ENCODE measurements at regions of chr15 and their contacts with region 1.

Region 1: GRCh38 chr15:61169904-61170695 is 59.0 kb downstream of the RORA start:
- DNase-seq: no peak
- ATAC-seq: no peak
- H3K4me3 ChIP-seq: no peak overlapping the region
- H3K27ac ChIP-seq: no peak overlapping the region
- H3K4me1 ChIP-seq: no peaks in the 10 kb centered on the region
- H3K27me3 ChIP-seq: no peaks in the 10 kb centered on the region; the same call in 1 of the 2 replicates
- CTCF ChIP-seq: no peak
- POLR2A ChIP-seq: no peak
- RAD21 ChIP-seq: no peak

Region 2: GRCh38 chr15:61080221-61081026 is 89.7 kb before region 1 on chr15:
- CTCF ChIA-PET with region 1: no interaction called
- POLR2A ChIA-PET with region 1: interaction called, 20 read pairs
- dilution Hi-C with region 1: no loop called
- in situ Hi-C with region 1: no loop called
- intact Hi-C with region 1: no loop called
- DNase-seq: no peak
- ATAC-seq: no peak
- H3K4me3 ChIP-seq: no peak overlapping the region
- H3K27ac ChIP-seq: no peak overlapping the region
- H3K4me1 ChIP-seq: peaks cover 2% of the 10 kb centered on the region; the same call in 1 of the 2 replicates
- H3K27me3 ChIP-seq: peaks cover 7% of the 10 kb centered on the region
- CTCF ChIP-seq: no peak
- POLR2A ChIP-seq: no peak
- RAD21 ChIP-seq: no peak

Region 3: DNA sequence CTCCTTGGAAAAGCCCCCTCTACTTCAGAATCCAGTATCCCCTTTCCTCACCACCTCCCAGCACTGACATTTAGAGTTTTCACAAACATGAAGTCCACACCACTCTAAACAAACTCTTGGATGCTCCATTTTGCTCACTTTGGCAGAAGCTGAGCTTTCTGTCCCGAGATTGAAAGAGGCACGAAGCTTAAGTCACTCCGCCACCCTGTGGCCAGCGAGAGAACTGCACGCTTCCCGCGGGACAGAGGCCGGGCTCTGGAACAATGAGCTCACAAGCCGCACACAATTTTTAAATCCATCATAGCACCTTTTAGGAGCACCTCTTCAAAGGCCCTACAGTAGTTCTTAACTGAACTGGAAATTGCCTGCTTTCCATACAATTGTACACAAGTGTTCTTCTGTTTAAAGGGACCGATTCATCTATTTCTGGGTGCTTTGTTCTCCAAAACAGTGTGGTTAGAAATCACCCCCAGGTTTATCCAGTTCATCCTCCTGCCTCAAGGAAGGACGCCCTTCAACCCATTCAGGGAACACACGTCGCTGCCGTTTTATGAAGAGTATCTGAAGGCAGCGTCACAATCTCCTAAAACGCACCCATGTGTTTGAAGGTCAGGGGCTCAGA is 664.1 kb after region 1 on chr15:
- CTCF ChIA-PET with region 1: interaction called, 6 read pairs
- POLR2A ChIA-PET with region 1: no interaction called
- dilution Hi-C with region 1: no loop called
- in situ Hi-C with region 1: no loop called
- intact Hi-C with region 1: loop called (anchors 1 kb)
- DNase-seq: peak; percentile 72
- ATAC-seq: peak; percentile 89
- H3K4me3 ChIP-seq: no peak overlapping the region
- H3K27ac ChIP-seq: no peak overlapping the region
- H3K4me1 ChIP-seq: no peaks in the 10 kb centered on the region
- H3K27me3 ChIP-seq: peaks cover 14% of the 10 kb centered on the region
- CTCF ChIP-seq: peak; percentile 92
- POLR2A ChIP-seq: no peak
- RAD21 ChIP-seq: peak; percentile 78

Measured in IMR-90 (cell line).